ENCODE measurements at regions of chr16 and their contacts with region 1.

Region 1: GRCh38 chr16:88437373-88437964 is 15.6 kb upstream of the ZFPM1 start:
- DNase-seq: peak in 8 of 9 donors; percentile 47 to 73 (median 58)
- ATAC-seq: peak; percentile 75
- H3K4me3 ChIP-seq: no peak overlapping the region
- H3K4me3 Mint-ChIP-seq: no peak overlapping the region
- H3K27ac ChIP-seq: no peak overlapping the region
- H3K27ac Mint-ChIP-seq: no peak overlapping the region
- H3K4me1 ChIP-seq: no peaks in the 10 kb centered on the region
- H3K4me1 Mint-ChIP-seq: peaks cover 0 to 2% (median 0%) of the 10 kb centered on the region in 7 donors
- H3K27me3 ChIP-seq: no peaks in the 10 kb centered on the region
- H3K27me3 Mint-ChIP-seq: no peaks in the 10 kb centered on the region

Region 2: GRCh38 chr16:87956365-87957231 is 480.9 kb before region 1 on chr16:
- CTCF ChIA-PET with region 1: no interaction called
- POLR2A ChIA-PET with region 1: no interaction called
- intact Hi-C with region 1: loop called in 1 of 2 experiments (anchors 1 kb)
- DNase-seq: peak; percentile 42 to 94 (median 83)
- ATAC-seq: peak; percentile 73
- H3K4me3 ChIP-seq: peak overlapping the region; percentile 50
- H3K4me3 Mint-ChIP-seq: peak overlapping the region; percentile 77 to 93 (median 86)
- H3K27ac ChIP-seq: peak overlapping the region; percentile 77
- H3K27ac Mint-ChIP-seq: peak overlapping the region; percentile 93 to 97 (median 96)
- H3K4me1 ChIP-seq: peaks cover 30 to 76% of the 10 kb centered on the region in 2 donors
- H3K4me1 Mint-ChIP-seq: peaks cover 49 to 97% (median 82%) of the 10 kb centered on the region in 7 donors
- H3K27me3 ChIP-seq: no peaks in the 10 kb centered on the region
- H3K27me3 Mint-ChIP-seq: no peaks in the 10 kb centered on the region

Region 3: DNA sequence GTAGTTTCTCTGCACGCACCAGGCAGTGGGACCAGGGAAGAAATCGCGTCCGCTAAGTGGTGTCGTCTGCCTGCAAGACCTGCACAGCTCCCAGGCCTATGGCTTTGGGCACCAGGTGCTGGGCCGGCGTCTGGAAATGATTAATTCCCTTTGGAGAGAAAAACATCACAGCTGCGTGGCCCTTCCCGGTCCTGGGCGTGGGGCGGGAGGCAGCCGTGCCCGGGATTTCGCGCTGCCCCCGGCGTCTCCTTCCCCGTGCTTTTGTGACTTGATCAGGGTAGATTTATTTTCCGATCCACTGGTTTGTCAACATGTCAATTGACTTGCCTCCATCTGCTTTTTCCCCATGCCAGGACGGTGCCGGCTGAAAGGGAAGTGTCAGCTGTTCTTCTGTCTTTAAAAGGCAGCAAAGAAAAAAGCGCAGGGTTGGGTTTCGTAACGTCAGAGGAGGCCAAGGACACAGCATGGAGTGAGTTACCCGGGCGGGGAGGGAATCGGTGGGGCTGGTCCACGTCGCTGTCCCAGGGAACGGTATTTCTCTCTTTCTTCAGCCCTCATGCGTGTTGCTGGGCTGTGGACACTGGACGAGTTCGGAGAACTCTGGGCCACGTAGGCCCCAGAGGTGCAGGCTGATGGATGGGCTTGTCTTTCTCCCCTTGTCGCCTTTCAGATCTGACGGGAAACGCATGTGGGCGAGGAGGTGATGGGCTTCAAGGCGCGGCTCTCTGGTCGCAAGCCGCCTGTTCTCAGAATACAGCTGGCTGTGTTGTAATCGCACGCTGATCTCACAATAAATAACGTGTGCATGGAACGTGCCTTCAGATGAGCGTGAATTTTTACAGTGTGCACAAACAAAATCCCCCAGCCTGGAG is 242.8 kb before region 1 on chr16:
- CTCF ChIA-PET with region 1: interaction called, 3 read pairs
- POLR2A ChIA-PET with region 1: no interaction called
- intact Hi-C with region 1: loop called in 1 of 2 experiments (anchors 5 kb)
- DNase-seq: no peak
- ATAC-seq: no peak
- H3K4me3 ChIP-seq: no peak overlapping the region
- H3K4me3 Mint-ChIP-seq: no peak overlapping the region
- H3K27ac ChIP-seq: no peak overlapping the region
- H3K27ac Mint-ChIP-seq: no peak overlapping the region
- H3K4me1 ChIP-seq: no peaks in the 10 kb centered on the region
- H3K4me1 Mint-ChIP-seq: peaks cover 0 to 11% (median 0%) of the 10 kb centered on the region in 7 donors
- H3K27me3 ChIP-seq: no peaks in the 10 kb centered on the region
- H3K27me3 Mint-ChIP-seq: peaks cover 0 to 4% (median 0%) of the 10 kb centered on the region in 5 donors

Region 4: GRCh38 chr16:88533381-88533891 is 96.0 kb after region 1 on chr16:
- CTCF ChIA-PET with region 1: no interaction called
- POLR2A ChIA-PET with region 1: no interaction called
- intact Hi-C with region 1: no loop called
- DNase-seq: no peak
- ATAC-seq: no peak
- H3K4me3 ChIP-seq: no peak overlapping the region
- H3K4me3 Mint-ChIP-seq: no peak overlapping the region
- H3K27ac ChIP-seq: no peak overlapping the region
- H3K27ac Mint-ChIP-seq: no peak overlapping the region
- H3K4me1 ChIP-seq: peaks cover 0 to 9% of the 10 kb centered on the region in 2 donors
- H3K4me1 Mint-ChIP-seq: peaks cover 9 to 16% (median 13%) of the 10 kb centered on the region in 7 donors
- H3K27me3 ChIP-seq: no peaks in the 10 kb centered on the region
- H3K27me3 Mint-ChIP-seq: peaks cover 0 to 3% (median 0%) of the 10 kb centered on the region in 5 donors